GM12878 (cell line): ENCODE measurements at regions of chr12 and their contacts with region 1.

Region 1: GRCh38 chr12:43676183-43676813 is 82.3 kb downstream of the PUS7L start:
- DNase-seq: peak; percentile 8
- ATAC-seq: peak; percentile 96
- H3K4me3 ChIP-seq: no peak overlapping the region
- H3K27ac ChIP-seq: no peak overlapping the region
- H3K4me1 ChIP-seq: no peaks in the 10 kb centered on the region
- H3K27me3 ChIP-seq: no peaks in the 10 kb centered on the region
- CTCF ChIP-seq: peak; percentile 63 to 77 (median 74)
- EP300 ChIP-seq: no peak
- POLR2A ChIP-seq: no peak
- RAD21 ChIP-seq: peak; percentile 52

Region 2: GRCh38 chr12:43349863-43350262 is 326.4 kb before region 1 on chr12:
- CTCF ChIA-PET with region 1: interaction called, 4 read pairs
- POLR2A ChIA-PET with region 1: no interaction called
- RAD21 ChIA-PET with region 1: interaction called, 4 read pairs
- SMC1A ChIA-PET with region 1: no interaction called
- in situ Hi-C with region 1: no loop called
- intact Hi-C with region 1: loop called (anchors 5 kb)
- DNase-seq: no peak
- ATAC-seq: no peak
- H3K4me3 ChIP-seq: no peak overlapping the region
- H3K27ac ChIP-seq: no peak overlapping the region
- H3K4me1 ChIP-seq: no peaks in the 10 kb centered on the region
- H3K27me3 ChIP-seq: no peaks in the 10 kb centered on the region
- CTCF ChIP-seq: peak in 2 of 3 experiments; percentile 3 to 18; a peak in 1 of 6 replicates
- EP300 ChIP-seq: no peak
- POLR2A ChIP-seq: no peak
- RAD21 ChIP-seq: peak; percentile 43; the same call in 1 of the 2 replicates

Region 3: GRCh38 chr12:43501703-43502102 is 174.6 kb before region 1 on chr12:
- CTCF ChIA-PET with region 1: no interaction called
- POLR2A ChIA-PET with region 1: no interaction called
- RAD21 ChIA-PET with region 1: interaction called, 3 read pairs
- SMC1A ChIA-PET with region 1: no interaction called
- in situ Hi-C with region 1: no loop called
- intact Hi-C with region 1: loop called (anchors 10 kb)
- DNase-seq: no peak
- ATAC-seq: no peak
- H3K4me3 ChIP-seq: no peak overlapping the region
- H3K27ac ChIP-seq: no peak overlapping the region
- H3K4me1 ChIP-seq: no peaks in the 10 kb centered on the region
- H3K27me3 ChIP-seq: no peaks in the 10 kb centered on the region
- CTCF ChIP-seq: peak; percentile 4 to 44 (median 23); a peak in 2 of 6 replicates
- EP300 ChIP-seq: no peak
- POLR2A ChIP-seq: no peak
- RAD21 ChIP-seq: peak; percentile 55

Region 4: GRCh38 chr12:44088647-44089046 is 412.3 kb after region 1 on chr12:
- CTCF ChIA-PET with region 1: no interaction called
- POLR2A ChIA-PET with region 1: no interaction called
- RAD21 ChIA-PET with region 1: no interaction called
- SMC1A ChIA-PET with region 1: no interaction called
- in situ Hi-C with region 1: no loop called
- intact Hi-C with region 1: no loop called
- DNase-seq: no peak
- ATAC-seq: no peak
- H3K4me3 ChIP-seq: no peak overlapping the region
- H3K27ac ChIP-seq: no peak overlapping the region
- H3K4me1 ChIP-seq: no peaks in the 10 kb centered on the region
- H3K27me3 ChIP-seq: no peaks in the 10 kb centered on the region
- CTCF ChIP-seq: no peak
- EP300 ChIP-seq: no peak
- POLR2A ChIP-seq: no peak
- RAD21 ChIP-seq: no peak